WTC11 (cell line): ENCODE measurements at regions of chr6 and their contacts with region 1.

Region 1: DNA sequence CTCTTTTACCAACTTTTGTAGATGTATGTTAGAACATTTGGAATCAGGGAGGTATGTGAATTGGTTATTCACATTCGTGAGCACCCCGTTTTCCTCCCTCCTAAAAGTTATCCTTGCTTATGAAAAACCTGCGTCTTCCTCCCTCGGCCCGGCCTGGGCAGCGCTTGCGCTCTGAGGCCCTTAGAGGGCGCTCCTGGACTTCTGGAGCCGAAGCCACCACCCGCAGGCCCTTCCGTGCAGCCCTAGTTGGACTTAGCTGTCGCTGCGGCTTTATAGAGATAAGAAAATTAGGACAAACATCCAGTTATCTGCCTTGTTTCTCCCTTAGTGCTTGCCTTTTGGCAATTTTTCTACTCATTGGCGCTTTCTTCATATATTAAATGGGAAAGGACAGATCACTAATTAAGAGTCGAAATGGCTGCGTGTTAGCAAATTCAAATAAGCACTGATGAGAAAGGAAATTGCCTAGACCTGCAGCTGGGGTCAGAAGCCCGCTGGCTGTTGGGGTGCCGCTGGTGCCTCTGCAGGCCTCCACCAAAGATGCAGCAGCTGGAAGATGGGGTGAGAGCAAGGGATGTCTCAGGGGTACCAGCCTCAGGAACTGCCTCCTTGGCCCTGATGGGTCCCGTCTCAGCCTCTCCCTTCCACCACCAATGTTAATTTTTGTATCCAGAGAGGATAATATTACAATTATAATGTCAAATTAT is 5.2 kb downstream of the FNDC1 start:
- DNase-seq: peak; percentile 83
- ATAC-seq: peak; percentile 81
- H3K4me3 Mint-ChIP-seq: peak overlapping the region; percentile 31; the same call in 1 of the 2 replicates
- H3K27ac Mint-ChIP-seq: no peak overlapping the region
- H3K4me1 Mint-ChIP-seq: peaks cover 8% of the 10 kb centered on the region
- H3K27me3 Mint-ChIP-seq: peaks cover 52% of the 10 kb centered on the region
- CTCF ChIP-seq: peak; percentile 79; the same call in 1 of the 2 replicates

Region 2: GRCh38 chr6:159212028-159212427 is 37.6 kb after region 1 on chr6:
- CTCF ChIA-PET with region 1: interaction called, 30 read pairs
- POLR2A ChIA-PET with region 1: no interaction called
- DNase-seq: no peak
- ATAC-seq: no peak
- H3K4me3 Mint-ChIP-seq: no peak overlapping the region
- H3K27ac Mint-ChIP-seq: no peak overlapping the region
- H3K4me1 Mint-ChIP-seq: no peaks in the 10 kb centered on the region
- H3K27me3 Mint-ChIP-seq: no peaks in the 10 kb centered on the region
- CTCF ChIP-seq: no peak

Region 3: DNA sequence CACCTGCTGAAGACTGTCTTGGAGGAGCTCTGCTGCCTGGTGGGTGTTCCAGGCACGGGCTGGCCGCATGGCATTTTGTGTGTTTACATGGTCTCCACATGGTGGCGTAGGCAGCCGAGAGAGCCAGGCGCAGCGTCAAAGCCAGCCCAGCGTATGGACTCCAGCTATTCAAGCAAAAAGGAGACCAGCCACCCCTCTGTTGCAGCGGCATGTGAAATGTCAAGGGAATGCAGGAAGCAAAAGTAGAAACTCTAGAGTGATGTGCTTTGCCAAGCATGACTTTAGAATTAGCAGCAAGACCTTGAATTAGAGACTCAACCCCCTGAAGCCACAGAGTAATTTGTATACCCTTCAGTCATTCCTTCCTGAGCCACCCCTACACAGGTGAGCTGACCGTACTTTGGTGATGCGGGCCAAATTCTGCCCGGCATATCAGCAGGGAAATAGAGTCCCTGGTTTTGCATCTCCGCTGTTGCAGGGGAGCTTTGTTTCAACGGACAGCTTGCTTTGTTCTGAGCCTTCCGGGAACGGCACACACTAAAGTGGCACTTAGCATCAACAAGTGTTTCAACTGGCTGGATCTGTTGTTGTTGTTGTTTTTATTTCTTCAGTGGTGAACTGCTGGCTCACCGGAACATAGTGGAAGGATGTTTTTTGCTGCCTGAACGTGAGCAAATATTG is 43.3 kb after region 1 on chr6:
- CTCF ChIA-PET with region 1: interaction called, 30 read pairs
- POLR2A ChIA-PET with region 1: no interaction called
- DNase-seq: peak; percentile 80
- ATAC-seq: peak; percentile 94
- H3K4me3 Mint-ChIP-seq: no peak overlapping the region
- H3K27ac Mint-ChIP-seq: peak overlapping the region; percentile 21; the same call in 1 of the 2 replicates
- H3K4me1 Mint-ChIP-seq: peaks cover 23% of the 10 kb centered on the region
- H3K27me3 Mint-ChIP-seq: no peaks in the 10 kb centered on the region
- CTCF ChIP-seq: 0 out of 2 replicates have a peak, but pooled peaks have one; percentile 14

Region 4: DNA sequence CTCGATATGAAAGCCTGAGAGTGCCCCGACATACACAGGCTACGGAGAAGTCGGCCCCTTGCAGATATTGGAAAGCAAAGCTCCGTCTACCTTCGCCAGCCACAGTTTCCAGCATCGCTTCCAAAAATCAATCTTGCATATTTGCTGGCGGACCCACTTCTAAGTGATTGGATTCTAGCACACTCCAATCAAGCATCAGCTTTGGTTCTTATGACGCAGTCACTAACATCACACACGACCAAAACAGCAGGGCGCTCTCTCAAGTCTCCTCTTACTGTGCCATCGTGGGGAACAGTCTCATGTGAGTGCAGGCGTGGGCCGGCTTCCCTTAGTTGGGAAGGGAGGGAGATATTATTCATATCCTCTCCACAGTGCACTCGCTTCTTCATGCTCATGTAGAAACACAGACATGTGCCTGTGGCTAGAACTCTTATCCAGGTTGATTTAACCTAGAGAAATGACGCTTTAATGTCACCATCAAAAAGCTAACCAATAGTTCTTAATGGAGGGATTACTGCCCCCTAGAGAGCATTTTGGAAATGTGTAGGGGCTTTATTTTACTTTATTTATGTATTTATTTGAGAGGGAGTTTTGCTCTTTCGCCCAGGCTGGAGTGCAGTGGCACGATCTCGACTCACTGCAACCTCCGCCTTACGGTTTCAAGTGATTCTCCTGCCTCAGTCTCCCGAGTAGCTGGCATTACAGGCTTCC is 288.9 kb after region 1 on chr6:
- CTCF ChIA-PET with region 1: interaction called, 33 read pairs
- POLR2A ChIA-PET with region 1: no interaction called
- DNase-seq: no peak
- ATAC-seq: 0 out of 2 replicates have a peak, but pooled peaks have one; percentile 22
- H3K4me3 Mint-ChIP-seq: no peak overlapping the region
- H3K27ac Mint-ChIP-seq: no peak overlapping the region
- H3K4me1 Mint-ChIP-seq: peaks cover 10% of the 10 kb centered on the region
- H3K27me3 Mint-ChIP-seq: no peaks in the 10 kb centered on the region
- CTCF ChIP-seq: peak; percentile 41; the same call in 1 of the 2 replicates

Region 5: DNA sequence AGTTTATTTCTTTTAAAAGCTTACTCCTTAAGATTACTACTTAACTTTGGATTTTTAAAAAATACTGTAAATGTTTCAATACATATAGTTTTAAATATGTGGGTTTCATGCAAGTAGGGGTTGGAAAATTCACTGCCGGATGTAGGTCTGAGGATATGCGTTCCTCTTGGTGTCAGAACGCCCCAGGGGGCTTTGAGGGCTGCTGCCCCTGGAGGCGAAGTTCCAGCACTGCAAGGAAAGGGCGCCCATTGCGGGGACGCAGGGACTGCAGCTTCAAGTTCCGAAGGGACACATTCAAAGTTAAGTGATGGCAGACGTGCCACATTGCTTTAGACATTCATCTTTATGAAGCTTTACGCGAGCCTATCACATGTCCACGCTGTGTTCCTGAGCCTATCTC is 365.7 kb after region 1 on chr6:
- CTCF ChIA-PET with region 1: interaction called, 10 read pairs
- POLR2A ChIA-PET with region 1: no interaction called
- DNase-seq: peak; percentile 82
- ATAC-seq: peak; percentile 93
- H3K4me3 Mint-ChIP-seq: no peak overlapping the region
- H3K27ac Mint-ChIP-seq: no peak overlapping the region
- H3K4me1 Mint-ChIP-seq: peaks cover 10% of the 10 kb centered on the region
- H3K27me3 Mint-ChIP-seq: peaks cover 12% of the 10 kb centered on the region
- CTCF ChIP-seq: peak; percentile 66

Region 6: GRCh38 chr6:159595173-159595572 is 420.8 kb after region 1 on chr6:
- CTCF ChIA-PET with region 1: interaction called, 10 read pairs
- POLR2A ChIA-PET with region 1: no interaction called
- DNase-seq: no peak
- ATAC-seq: no peak
- H3K4me3 Mint-ChIP-seq: no peak overlapping the region
- H3K27ac Mint-ChIP-seq: no peak overlapping the region
- H3K4me1 Mint-ChIP-seq: no peaks in the 10 kb centered on the region
- H3K27me3 Mint-ChIP-seq: no peaks in the 10 kb centered on the region
- CTCF ChIP-seq: no peak